Calu3 (cell line): ENCODE measurements at regions of chr2 and their contacts with region 1.

Region 1: DNA sequence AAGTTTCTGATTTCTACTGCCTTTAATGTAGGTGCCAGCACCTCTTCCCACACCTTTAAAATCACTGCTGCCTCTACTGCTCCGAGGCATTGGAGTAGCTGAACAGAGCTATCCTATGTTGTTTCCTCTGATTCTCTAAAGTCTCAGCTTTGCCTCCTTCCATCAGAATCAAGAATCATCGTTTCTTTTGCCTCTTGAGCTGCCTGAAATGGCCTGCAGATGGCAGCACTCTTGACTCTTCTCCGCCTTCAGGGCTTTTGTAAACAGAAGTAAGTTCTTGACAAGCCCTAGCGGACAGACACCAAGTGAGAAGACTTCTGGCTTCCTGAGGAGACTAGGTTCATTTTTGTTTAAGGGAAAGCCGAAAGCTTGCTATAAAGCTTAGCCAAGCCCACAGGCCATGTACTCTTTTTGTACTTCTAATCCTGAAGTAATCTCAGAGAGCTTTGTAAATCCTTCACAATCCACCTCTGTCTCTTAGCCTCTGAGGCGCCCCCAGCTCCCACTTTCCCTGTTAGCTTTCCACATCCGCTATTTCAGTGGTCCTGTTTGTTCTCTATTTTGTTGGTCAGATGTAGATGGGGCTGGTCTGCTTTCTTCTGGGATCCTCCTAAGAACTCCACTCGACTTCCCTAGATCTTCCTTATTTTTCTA is 48.4 kb downstream of the GTF3C3 start:
- DNase-seq: peak; percentile 58
- H3K4me3 Mint-ChIP-seq: no peak overlapping the region
- H3K27ac Mint-ChIP-seq: no peak overlapping the region
- H3K4me1 Mint-ChIP-seq: no peaks in the 10 kb centered on the region
- H3K27me3 Mint-ChIP-seq: no peaks in the 10 kb centered on the region
- CTCF ChIP-seq: peak; percentile 74

Region 2: DNA sequence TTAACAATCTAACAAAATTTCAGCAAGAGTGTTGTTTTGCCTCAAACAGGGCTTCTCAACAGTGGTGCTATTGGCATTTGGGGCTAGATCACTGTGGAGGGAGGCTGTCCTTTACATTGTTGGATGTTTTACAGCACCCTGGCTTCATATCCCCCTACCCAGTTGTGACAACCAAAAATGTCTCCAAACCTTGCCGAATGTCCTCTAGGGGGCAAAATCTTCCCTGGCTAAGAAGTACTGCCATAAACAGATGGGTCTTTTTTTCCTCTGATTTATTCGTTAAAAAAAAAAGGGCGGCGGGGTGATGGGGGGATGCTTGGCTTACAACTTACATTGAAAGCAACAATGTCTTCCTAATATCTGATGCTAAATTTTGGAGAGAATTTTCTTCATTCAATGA is 319.2 kb before region 1 on chr2:
- CTCF ChIA-PET with region 1: no interaction called
- intact Hi-C with region 1: loop called (anchors 10 kb)
- DNase-seq: peak; percentile 19
- H3K4me3 Mint-ChIP-seq: no peak overlapping the region
- H3K27ac Mint-ChIP-seq: no peak overlapping the region
- H3K4me1 Mint-ChIP-seq: peaks cover 11% of the 10 kb centered on the region
- H3K27me3 Mint-ChIP-seq: no peaks in the 10 kb centered on the region
- CTCF ChIP-seq: peak; percentile 43

Region 3: DNA sequence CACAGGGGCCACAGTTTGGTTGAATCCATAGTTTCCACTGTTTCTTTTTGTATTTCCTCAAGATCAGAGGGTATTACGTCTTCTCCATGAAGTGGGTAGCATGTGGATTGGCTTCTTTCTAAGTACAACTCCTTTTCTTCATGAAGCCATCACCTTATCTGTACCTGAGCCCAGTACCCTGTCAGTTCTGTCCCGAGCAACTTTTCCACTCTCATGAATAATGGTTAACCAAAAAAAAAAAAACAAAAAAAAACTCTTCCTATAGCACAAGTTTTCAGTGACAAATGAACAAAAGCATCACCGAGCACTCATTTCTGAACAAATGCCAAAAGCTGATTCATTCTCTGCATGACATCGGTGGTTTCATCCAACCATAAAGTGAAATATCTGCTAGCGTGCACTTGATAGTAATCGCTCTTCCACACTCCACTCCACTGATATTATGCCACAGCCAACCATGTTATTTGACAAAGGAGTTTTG is 164.6 kb before region 1 on chr2:
- CTCF ChIA-PET with region 1: no interaction called
- intact Hi-C with region 1: loop called (anchors 10 kb)
- DNase-seq: no peak
- H3K4me3 Mint-ChIP-seq: no peak overlapping the region
- H3K27ac Mint-ChIP-seq: no peak overlapping the region
- H3K4me1 Mint-ChIP-seq: peaks cover 8% of the 10 kb centered on the region
- H3K27me3 Mint-ChIP-seq: no peaks in the 10 kb centered on the region
- CTCF ChIP-seq: no peak